ENCODE measurements at regions of chr15 and their contacts with region 1.

Region 1: GRCh38 chr15:51281368-51281967 is 56.9 kb downstream of the CYP19A1 start:
- DNase-seq: peak; percentile 34 to 88 (median 80)
- H3K4me3 ChIP-seq: no peak overlapping the region
- H3K27ac ChIP-seq: peak overlapping the region in 5 of 59 donors; percentile 20 to 51 (median 30)
- H3K27me3 ChIP-seq: peaks cover 0 to 4% (median 0%) of the 10 kb centered on the region in 45 donors
- CTCF ChIP-seq: peak; percentile 45 to 94 (median 77)

Region 2: DNA sequence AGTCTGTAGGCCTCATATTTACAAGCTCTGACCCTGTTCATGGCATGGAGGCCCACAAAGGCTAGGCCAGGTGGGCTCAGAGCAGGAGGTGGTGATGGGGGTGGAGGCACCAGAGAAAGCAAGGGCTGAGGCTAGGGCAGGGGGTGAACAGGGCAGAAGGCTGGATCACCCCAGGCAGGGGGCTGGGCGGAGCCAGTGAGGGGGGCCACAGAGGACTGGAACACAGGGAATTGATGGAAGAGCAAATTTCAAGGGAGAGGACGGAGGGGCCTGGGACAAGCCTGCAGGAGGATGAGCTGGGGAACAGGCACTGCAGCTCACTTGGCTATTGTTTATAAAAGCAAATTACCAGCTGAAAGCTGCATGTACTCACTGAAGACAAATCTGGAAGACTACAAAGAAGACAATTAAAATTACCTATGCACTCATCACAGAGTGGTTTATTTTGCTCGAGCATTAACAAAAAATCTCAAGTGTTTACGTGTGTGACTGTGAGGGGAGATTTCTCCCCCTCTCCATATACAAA is 197.8 kb before region 1 on chr15:
- intact Hi-C with region 1: no loop called
- DNase-seq: no peak
- H3K4me3 ChIP-seq: no peak overlapping the region
- H3K27ac ChIP-seq: no peak overlapping the region
- H3K27me3 ChIP-seq: no peaks in the 10 kb centered on the region
- CTCF ChIP-seq: no peak

Region 3: GRCh38 chr15:51227940-51228783 is 53.3 kb before region 1 on chr15:
- intact Hi-C with region 1: loop called in 1 of 2 experiments (anchors 5 kb)
- DNase-seq: no peak
- H3K4me3 ChIP-seq: no peak overlapping the region
- H3K27ac ChIP-seq: no peak overlapping the region
- H3K27me3 ChIP-seq: peaks cover 0 to 2% (median 0%) of the 10 kb centered on the region in 45 donors
- CTCF ChIP-seq: no peak

Region 4: GRCh38 chr15:51341366-51342226 is 60.1 kb after region 1 on chr15 and contains the start of gene GLDN:
- intact Hi-C with region 1: loop called in 1 of 2 experiments (anchors 5 kb)
- DNase-seq: peak; percentile 26 to 91 (median 84)
- H3K4me3 ChIP-seq: peak within 1 kb of the TSS; percentile 39 to 84 (median 71)
- H3K27ac ChIP-seq: peak within 1 kb of the TSS; percentile 60 to 99 (median 94)
- H3K27me3 ChIP-seq: no peaks in the 10 kb centered on the region
- CTCF ChIP-seq: peak in 29 of 56 donors; percentile 4 to 62 (median 14)
- total RNA-seq, gene GLDN: 10.0 to 223 (median 46.3) TPM

Region 5: DNA sequence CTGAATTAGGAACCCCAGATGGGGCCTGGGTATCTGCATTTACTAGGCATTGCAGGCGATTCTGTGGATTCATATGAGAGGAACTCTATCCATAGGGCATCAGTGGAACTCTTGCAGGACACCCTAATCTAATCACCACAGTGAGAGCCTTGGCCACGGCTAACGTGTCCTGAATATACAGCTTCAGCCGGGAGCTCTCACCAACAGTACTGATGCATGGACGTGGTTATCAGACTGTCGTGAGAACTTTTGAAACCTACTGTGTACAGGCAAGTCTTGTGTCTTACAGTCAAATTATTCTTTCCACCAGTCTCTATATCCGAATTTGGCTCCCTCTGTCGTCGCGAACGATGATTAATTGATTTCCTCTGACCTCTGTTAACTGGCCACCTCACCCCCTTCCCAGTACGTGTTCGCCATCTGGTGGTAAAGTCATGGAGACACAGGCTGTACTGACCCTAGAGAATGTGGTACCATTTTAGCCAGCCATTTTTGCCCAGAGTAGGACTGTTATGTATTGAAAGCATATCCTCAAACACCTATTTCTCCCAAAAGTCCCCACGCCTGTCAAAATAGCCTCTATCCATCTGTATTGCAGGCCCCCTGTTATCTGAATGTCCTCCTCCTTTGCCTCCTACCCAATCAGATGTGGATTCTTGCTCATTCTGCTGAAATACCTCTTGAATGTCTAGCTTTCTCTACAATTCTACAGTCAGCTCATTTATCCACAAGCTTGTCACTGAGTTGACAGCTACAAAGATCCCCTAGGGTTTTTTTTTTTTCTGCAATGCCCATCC is 99.7 kb after region 1 on chr15:
- intact Hi-C with region 1: loop called (anchors 1 to 2 kb)
- DNase-seq: peak; percentile 33 to 78 (median 61)
- H3K4me3 ChIP-seq: peak overlapping the region in 6 of 59 donors; percentile 13 to 34 (median 20)
- H3K27ac ChIP-seq: peak overlapping the region in 51 of 59 donors; percentile 4 to 97 (median 84)
- H3K27me3 ChIP-seq: no peaks in the 10 kb centered on the region
- CTCF ChIP-seq: peak; percentile 51 to 99 (median 93)

Region 6: GRCh38 chr15:51401872-51402517 is 120.5 kb after region 1 on chr15:
- intact Hi-C with region 1: loop called in 1 of 2 experiments (anchors 5 kb)
- DNase-seq: peak in 7 of 10 donors; percentile 23 to 69 (median 51)
- H3K4me3 ChIP-seq: no peak overlapping the region
- H3K27ac ChIP-seq: peak overlapping the region in 2 of 59 donors; percentile 3 to 8
- H3K27me3 ChIP-seq: no peaks in the 10 kb centered on the region
- CTCF ChIP-seq: peak; percentile 44 to 77 (median 64)

Region 7: GRCh38 chr15:51499379-51499976 is 218.0 kb after region 1 on chr15:
- intact Hi-C with region 1: loop called in 1 of 2 experiments (anchors 10 kb)
- DNase-seq: no peak
- H3K4me3 ChIP-seq: no peak overlapping the region
- H3K27ac ChIP-seq: no peak overlapping the region
- H3K27me3 ChIP-seq: no peaks in the 10 kb centered on the region
- CTCF ChIP-seq: peak in 52 of 56 donors; percentile 18 to 68 (median 47)